ENCODE measurements at regions of chr10 and their contacts with region 1.

Region 1: DNA sequence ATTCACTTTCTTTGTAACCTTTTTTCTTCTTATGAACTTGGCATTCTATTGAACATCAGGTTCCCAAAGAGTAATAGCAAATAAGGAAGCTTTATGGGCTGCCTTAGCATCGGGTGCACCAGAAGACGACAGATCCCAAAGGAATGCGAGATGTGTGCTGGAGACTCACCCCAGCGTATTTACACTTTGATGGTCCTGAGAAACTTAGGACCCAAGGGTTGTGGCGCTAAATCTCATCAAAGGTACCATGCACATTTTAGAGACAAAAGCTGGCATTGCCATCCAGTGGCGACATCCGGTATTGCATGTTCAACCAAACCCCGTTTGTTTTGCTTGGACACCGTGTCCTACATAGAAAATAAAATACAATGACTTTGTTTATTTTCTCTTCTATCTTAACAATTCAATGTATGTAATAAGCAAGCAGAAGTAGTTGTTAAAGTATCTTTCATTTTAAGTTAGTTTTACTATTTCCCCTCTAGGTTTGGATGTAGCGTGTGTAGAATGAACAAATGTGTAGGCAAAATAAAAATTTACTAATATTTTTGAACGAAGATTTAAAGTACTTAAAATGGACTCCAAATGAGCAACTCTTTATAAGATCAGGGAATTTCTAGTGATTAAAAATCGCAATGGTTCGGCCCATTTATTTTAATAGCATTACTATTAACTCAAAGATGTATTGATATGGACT is 1154.8 kb downstream of the GATA3 start:
- DNase-seq: peak; percentile 56 to 83
- ATAC-seq: peak in 2 of 3 donors; percentile 65 to 67
- H3K4me3 ChIP-seq: no peak overlapping the region
- H3K4me3 Mint-ChIP-seq: no peak overlapping the region
- H3K27ac ChIP-seq: no peak overlapping the region
- H3K27ac Mint-ChIP-seq: no peak overlapping the region
- H3K4me1 ChIP-seq: no peaks in the 10 kb centered on the region
- H3K4me1 Mint-ChIP-seq: no peaks in the 10 kb centered on the region
- H3K27me3 ChIP-seq: peaks cover 3% of the 10 kb centered on the region
- H3K27me3 Mint-ChIP-seq: peaks cover 4 to 14% of the 10 kb centered on the region in 2 donors
- CTCF ChIP-seq: peak; percentile 89

Region 2: DNA sequence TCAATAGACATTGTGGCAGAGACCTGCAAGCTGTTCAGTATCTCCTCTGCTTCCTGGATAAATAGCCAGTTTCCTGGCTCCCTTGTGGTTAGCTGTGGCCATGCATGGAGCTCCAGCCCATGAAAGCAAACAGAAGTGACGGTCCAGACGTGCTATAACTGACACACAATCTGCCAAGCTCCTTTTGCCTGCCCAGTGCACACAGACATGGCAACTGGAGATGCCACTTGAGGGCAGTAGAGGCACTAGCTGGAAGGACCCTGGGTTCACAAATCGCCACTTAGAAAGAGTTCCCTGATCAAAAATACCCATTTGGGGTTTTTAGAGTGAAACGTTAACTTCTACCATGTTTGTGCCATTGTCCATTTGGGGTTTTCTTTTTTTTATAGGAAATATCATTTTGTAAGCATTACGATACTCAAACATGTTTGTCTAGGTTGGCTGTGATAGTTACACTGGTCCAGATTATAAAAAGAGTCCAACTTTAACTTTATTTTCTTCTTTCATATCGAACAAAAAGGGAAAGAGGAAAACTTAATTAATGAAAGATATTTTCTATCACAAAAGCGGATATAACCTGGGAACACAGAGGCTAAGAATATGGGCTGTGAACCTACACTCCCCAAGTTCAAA is 1452.8 kb before region 1 on chr10:
- intact Hi-C with region 1: loop called (anchors 10 kb)
- DNase-seq: peak in 1 of 2 donors; percentile 46
- ATAC-seq: peak in 1 of 3 donors; percentile 40
- H3K4me3 ChIP-seq: no peak overlapping the region
- H3K4me3 Mint-ChIP-seq: no peak overlapping the region
- H3K27ac ChIP-seq: no peak overlapping the region
- H3K27ac Mint-ChIP-seq: no peak overlapping the region
- H3K4me1 ChIP-seq: no peaks in the 10 kb centered on the region
- H3K4me1 Mint-ChIP-seq: no peaks in the 10 kb centered on the region
- H3K27me3 ChIP-seq: no peaks in the 10 kb centered on the region
- H3K27me3 Mint-ChIP-seq: no peaks in the 10 kb centered on the region
- CTCF ChIP-seq: no peak

Region 3: DNA sequence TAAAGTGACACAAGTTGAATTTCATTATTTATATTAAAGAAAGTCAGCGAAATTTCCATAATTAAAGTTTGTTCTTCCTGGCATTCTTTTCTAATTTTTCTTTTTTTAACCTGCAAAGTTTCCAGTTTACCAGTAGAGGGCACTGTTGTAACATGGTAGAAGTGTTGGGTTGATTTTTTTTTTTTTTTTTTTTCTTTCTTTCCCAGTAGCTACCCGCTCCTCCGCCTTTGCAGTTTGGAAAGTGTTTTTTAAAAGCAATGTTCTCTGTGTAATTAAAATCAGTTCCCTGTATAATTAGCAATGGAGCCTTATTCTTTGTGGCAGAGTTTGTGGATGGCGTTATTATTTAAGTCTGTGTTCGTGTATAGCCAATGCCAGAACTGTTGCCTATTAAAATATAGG is 1337.2 kb before region 1 on chr10:
- intact Hi-C with region 1: loop called (anchors 1 kb)
- DNase-seq: peak in 1 of 2 donors; percentile 60
- ATAC-seq: peak in 2 of 3 donors; percentile 40 to 50
- H3K4me3 ChIP-seq: no peak overlapping the region
- H3K4me3 Mint-ChIP-seq: peak overlapping the region; percentile 73
- H3K27ac ChIP-seq: no peak overlapping the region
- H3K27ac Mint-ChIP-seq: peak overlapping the region in 1 of 2 donors; percentile 34
- H3K4me1 ChIP-seq: no peaks in the 10 kb centered on the region
- H3K4me1 Mint-ChIP-seq: peaks cover 13% of the 10 kb centered on the region in 2 donors
- H3K27me3 ChIP-seq: no peaks in the 10 kb centered on the region
- H3K27me3 Mint-ChIP-seq: no peaks in the 10 kb centered on the region
- CTCF ChIP-seq: peak; percentile 94

Measured in natural killer cell (primary cell).